Natural killer cell (primary cell): ENCODE measurements at regions of chr7 and their contacts with region 1.

Region 1: DNA sequence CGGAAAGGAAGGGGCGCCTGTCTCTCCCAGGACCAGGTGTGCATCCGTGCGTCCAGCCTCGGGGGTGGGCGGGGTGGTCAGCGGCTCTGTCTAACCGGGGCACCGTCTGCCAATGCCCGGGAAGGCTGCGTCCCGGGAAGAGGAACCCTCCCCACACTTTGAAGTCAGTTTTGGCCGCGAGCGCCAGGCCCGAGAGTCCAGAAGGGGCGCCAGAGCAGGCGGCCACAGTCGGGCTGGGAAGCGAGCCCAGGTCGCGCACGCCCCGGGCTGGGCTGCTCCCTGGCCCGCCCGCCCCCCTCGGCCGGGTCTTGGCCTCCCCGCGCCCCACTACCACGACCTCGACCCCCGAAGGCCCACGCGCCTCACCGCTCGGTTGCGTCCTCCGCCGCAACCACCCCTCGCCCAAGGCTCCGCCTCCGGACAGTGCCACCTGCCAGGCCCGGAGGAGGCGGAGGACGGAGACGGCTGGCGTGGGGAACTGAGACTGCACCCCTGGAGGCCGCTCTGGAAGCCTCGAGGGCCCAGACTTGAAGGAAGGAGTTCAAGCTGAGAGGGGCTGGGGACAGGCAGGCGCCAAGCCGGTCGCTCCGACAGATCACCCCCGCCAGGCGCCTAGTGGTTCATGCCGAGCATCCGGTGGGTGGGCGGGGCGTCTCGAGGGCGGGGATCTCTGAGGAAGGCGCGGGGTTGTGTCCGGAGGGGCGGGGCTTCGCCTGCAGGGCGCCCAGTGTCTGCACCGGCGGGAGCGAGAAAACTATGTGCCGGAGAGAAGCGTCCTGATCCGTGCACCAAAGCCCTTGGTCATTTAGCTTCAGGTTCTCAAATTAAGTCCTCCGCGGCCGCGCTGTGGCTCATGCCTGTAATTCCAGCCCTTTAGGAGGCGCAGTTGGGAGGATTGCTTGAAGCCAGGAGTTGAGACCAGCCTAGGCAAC is at the start of gene BRAT1:
- DNase-seq: peak; percentile 90 to 96
- ATAC-seq: peak; percentile 86 to 94 (median 90)
- H3K4me3 ChIP-seq: peak within 1 kb of the TSS; percentile 89
- H3K4me3 Mint-ChIP-seq: peak within 1 kb of the TSS; percentile 88
- H3K27ac ChIP-seq: peak within 1 kb of the TSS; percentile 99
- H3K27ac Mint-ChIP-seq: peak within 1 kb of the TSS; percentile 73 to 86
- H3K4me1 ChIP-seq: peaks cover 40% of the 10 kb centered on the region
- H3K4me1 Mint-ChIP-seq: peaks cover 30 to 41% of the 10 kb centered on the region in 2 donors
- H3K27me3 ChIP-seq: no peaks in the 10 kb centered on the region
- H3K27me3 Mint-ChIP-seq: no peaks in the 10 kb centered on the region
- CTCF ChIP-seq: peak; percentile 55
- total RNA-seq, gene BRAT1: 24.9 to 26.7 (median 25.6) TPM

Region 2: GRCh38 chr7:2241580-2242540 is 313.5 kb before region 1 on chr7 and contains the starts of genes MRM2 and NUDT1:
- intact Hi-C with region 1: no loop called
- DNase-seq: peak; percentile 73 to 78
- ATAC-seq: peak; percentile 84 to 86 (median 84)
- H3K4me3 ChIP-seq: peak within 1 kb of the TSS; percentile 96
- H3K4me3 Mint-ChIP-seq: peak within 1 kb of the TSS; percentile 95
- H3K27ac ChIP-seq: peak within 1 kb of the TSS; percentile 68
- H3K27ac Mint-ChIP-seq: peak within 1 kb of the TSS; percentile 74 to 97
- H3K4me1 ChIP-seq: peaks cover 59% of the 10 kb centered on the region
- H3K4me1 Mint-ChIP-seq: peaks cover 4 to 28% of the 10 kb centered on the region in 2 donors
- H3K27me3 ChIP-seq: no peaks in the 10 kb centered on the region
- H3K27me3 Mint-ChIP-seq: no peaks in the 10 kb centered on the region
- CTCF ChIP-seq: no peak
- total RNA-seq, gene MRM2: 7.9 to 12.0 (median 10.0) TPM
- total RNA-seq, gene NUDT1: 17.9 to 19.2 (median 18.2) TPM

Region 3: DNA sequence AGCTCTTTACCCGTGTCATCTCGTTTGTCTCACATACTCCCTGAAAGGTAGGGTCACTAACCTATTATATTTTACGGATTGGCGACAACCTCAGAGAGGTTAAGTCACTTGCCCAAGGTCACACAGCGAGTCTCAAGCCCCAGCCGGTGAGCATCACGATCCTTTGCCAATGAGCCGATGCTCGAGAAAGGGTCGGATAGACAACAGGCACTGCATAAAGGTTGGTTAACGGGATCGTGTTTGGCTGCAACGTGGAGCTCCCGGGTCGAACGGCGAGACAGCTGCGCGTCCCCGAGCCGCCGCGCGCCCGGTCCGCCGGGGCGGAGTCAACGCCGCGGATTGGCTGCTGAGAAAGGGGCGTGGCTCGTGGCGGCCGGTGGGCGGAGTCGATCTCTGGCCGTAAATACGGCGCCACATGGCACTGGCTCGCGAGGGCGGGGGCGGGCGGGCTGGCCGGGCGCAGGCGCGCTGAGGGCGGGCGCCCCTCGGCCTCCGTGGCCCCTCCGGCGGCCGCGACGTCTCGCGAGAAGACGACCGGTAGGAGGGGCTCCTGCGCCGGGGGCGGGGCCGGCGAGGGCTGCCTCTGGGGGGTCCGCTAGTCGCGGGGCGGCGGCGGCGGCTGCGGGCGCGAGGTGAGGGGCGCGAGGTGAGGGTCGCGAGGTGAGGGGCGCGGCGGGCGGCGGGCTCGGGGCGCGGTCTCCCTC is 152.2 kb before region 1 on chr7 and contains the start of gene CHST12:
- intact Hi-C with region 1: loop called (anchors 10 kb)
- DNase-seq: peak; percentile 95 to 97
- ATAC-seq: peak; percentile 71 to 91 (median 77)
- H3K4me3 ChIP-seq: peak within 1 kb of the TSS; percentile 94
- H3K4me3 Mint-ChIP-seq: peak within 1 kb of the TSS; percentile 96
- H3K27ac ChIP-seq: peak within 1 kb of the TSS; percentile 71
- H3K27ac Mint-ChIP-seq: peak within 1 kb of the TSS; percentile 94 to 95
- H3K4me1 ChIP-seq: peaks cover 66% of the 10 kb centered on the region
- H3K4me1 Mint-ChIP-seq: peaks cover 53 to 57% of the 10 kb centered on the region in 2 donors
- H3K27me3 ChIP-seq: no peaks in the 10 kb centered on the region
- H3K27me3 Mint-ChIP-seq: no peaks in the 10 kb centered on the region
- CTCF ChIP-seq: no peak
- total RNA-seq, gene CHST12: 102 to 159 (median 124) TPM

Region 4: GRCh38 chr7:2477447-2478398 is 77.7 kb before region 1 on chr7:
- intact Hi-C with region 1: loop called (anchors 5 kb)
- DNase-seq: peak; percentile 73 to 80
- ATAC-seq: peak; percentile 93 to 98 (median 96)
- H3K4me3 ChIP-seq: no peak overlapping the region
- H3K4me3 Mint-ChIP-seq: no peak overlapping the region
- H3K27ac ChIP-seq: no peak overlapping the region
- H3K27ac Mint-ChIP-seq: peak overlapping the region in 1 of 2 donors; percentile 33
- H3K4me1 ChIP-seq: peaks cover 19% of the 10 kb centered on the region
- H3K4me1 Mint-ChIP-seq: peaks cover 0 to 18% of the 10 kb centered on the region in 2 donors
- H3K27me3 ChIP-seq: no peaks in the 10 kb centered on the region
- H3K27me3 Mint-ChIP-seq: peaks cover 0 to 3% of the 10 kb centered on the region in 2 donors
- CTCF ChIP-seq: peak; percentile 80

Region 5: DNA sequence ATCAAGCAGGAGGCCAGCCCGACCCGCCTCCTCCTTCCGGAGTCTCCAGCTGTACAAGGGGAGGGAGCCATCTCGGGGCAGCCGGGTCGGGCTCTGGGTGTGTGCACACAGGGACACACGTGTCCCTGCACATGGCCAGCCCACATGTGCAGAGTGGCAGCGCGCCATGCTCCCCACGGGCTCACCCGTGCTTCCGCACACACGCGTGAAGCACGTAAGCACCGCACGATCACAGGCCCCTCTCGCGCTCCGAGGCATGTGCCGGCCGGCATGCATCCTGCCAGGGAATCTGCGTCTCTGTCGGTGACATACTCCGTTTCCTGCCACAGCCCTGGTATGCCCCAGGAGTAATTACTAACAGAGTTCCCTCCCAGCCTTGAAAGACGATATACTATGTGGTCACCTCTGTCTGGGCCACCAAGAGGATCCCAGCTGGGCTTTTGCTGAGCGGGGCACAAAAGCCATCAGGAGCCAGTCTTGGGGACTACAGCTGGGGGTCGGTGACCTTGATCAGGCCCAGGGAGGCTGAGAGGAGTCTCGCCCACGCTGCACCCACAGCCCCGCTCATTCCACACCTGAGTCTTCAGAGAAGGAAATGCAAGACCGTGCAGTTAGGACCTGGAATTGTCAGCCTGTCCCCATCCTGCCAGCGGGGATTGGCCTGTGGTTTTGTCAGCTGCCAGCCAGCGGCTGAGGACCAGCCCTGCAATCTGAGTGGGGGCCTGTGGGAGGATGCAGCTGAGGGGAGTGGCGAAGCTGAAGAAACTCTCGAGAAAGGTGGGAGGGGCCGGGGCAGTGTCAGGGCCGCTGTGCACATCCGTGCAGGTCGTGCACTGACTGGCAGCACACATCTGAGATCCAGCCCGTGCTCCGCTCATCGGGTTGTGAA is 46.8 kb before region 1 on chr7:
- intact Hi-C with region 1: loop called (anchors 1 kb)
- DNase-seq: peak; percentile 72 to 94
- ATAC-seq: peak; percentile 49 to 68 (median 61)
- H3K4me3 ChIP-seq: peak overlapping the region; percentile 12
- H3K4me3 Mint-ChIP-seq: peak overlapping the region; percentile 76
- H3K27ac ChIP-seq: peak overlapping the region; percentile 90
- H3K27ac Mint-ChIP-seq: peak overlapping the region in 1 of 2 donors; percentile 95
- H3K4me1 ChIP-seq: peaks cover 64% of the 10 kb centered on the region
- H3K4me1 Mint-ChIP-seq: peaks cover 37 to 61% of the 10 kb centered on the region in 2 donors
- H3K27me3 ChIP-seq: no peaks in the 10 kb centered on the region
- H3K27me3 Mint-ChIP-seq: no peaks in the 10 kb centered on the region
- CTCF ChIP-seq: no peak

Region 6: DNA sequence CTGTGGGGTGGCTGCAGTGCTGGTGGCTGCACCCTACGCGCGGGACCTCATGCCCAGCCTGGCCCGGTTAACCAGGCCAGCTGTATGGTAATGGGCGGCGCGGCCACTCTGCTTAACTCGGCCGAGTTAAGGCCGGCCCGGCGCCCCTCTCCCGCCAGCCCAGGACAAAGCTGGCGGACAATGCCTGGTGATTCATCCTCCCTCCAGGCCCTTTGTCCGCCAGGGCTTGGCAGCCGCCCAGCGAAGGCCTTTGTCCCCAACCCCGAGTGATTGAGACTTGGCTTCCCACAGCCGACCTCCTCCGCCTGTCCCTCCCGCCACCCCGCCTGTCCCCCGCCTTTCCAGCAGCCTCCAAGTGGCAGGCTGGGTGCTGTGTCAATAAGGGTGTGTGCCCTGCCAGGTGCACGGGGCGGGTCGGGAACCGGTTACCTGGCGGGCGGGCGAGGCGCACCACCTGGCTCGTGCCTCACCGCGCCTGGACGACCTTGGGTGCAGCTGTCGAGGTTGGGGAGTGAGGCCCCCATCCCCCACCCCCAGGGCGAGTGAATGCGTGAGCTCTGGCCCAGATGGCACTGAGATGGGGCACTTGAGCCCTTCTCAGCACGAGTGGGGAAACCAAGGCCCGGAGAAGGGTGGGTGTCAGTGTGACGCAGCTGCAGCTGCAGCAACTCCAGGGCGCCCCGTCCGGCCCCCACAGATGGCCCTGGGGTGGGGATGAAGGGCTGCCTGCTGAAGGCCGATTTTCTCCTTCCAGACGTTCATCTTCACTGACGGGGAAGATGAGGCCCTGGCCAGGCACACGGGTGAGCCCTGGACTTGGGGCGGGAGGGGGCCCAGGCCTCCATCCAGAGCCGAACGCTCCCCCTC is 31.2 kb before region 1 on chr7:
- intact Hi-C with region 1: loop called (anchors 2 kb)
- DNase-seq: peak in 1 of 2 donors; percentile 34
- ATAC-seq: no peak
- H3K4me3 ChIP-seq: no peak overlapping the region
- H3K4me3 Mint-ChIP-seq: peak overlapping the region; percentile 92
- H3K27ac ChIP-seq: peak overlapping the region; percentile 41
- H3K27ac Mint-ChIP-seq: peak overlapping the region; percentile 94 to 97
- H3K4me1 ChIP-seq: peaks cover 80% of the 10 kb centered on the region
- H3K4me1 Mint-ChIP-seq: peaks cover 36 to 52% of the 10 kb centered on the region in 2 donors
- H3K27me3 ChIP-seq: no peaks in the 10 kb centered on the region
- H3K27me3 Mint-ChIP-seq: no peaks in the 10 kb centered on the region
- CTCF ChIP-seq: no peak

Region 7: DNA sequence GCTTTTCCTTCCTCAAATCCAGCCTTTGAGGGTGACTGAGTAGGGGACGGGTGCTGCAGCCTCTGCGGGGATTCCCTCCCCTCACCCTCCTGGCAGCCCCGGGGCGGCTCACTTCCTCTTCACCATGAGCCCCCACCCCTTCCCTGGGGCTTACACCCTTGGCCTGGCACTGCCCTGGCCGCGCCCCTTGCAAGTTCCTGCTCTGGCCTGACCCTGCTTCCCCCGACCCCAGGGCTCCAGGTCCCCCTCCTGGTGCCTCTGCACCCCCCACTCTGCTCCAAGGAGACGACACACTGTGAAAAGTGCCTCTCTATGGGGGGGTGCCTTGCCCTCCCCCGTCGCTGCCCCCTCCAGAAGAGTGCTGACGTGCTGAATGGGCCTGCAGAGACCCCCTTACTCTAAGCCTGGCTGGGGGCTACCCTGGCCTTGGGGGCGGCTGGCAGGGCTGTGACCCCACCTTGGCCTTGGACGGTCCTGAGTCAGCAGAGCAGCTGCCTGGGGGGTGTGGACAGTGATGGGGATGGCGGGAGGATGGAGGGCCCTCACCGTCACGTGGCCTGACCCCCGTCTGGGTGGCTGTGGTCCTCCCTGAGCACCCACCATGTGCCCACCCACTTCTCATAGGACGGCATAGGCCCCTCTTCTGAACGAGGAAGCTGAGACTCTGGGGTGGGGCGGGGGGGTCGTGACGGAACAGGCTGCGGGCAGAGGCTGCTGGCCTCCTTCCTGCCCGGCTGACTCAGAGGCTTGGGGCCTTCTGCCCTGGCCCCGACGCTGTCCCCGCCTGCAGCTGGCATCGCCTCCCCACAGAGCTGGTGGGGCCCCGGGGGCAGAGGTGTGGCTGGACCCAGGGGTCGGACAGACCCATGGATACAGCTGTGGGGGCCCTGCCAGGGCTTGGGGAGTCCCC is 26.0 kb before region 1 on chr7:
- intact Hi-C with region 1: loop called (anchors 2 kb)
- DNase-seq: peak; percentile 71 to 83
- ATAC-seq: peak; percentile 55 to 75 (median 59)
- H3K4me3 ChIP-seq: peak overlapping the region; percentile 10
- H3K4me3 Mint-ChIP-seq: peak overlapping the region; percentile 82
- H3K27ac ChIP-seq: peak overlapping the region; percentile 94
- H3K27ac Mint-ChIP-seq: peak overlapping the region; percentile 90 to 97
- H3K4me1 ChIP-seq: peaks cover 72% of the 10 kb centered on the region
- H3K4me1 Mint-ChIP-seq: peaks cover 26 to 51% of the 10 kb centered on the region in 2 donors
- H3K27me3 ChIP-seq: no peaks in the 10 kb centered on the region
- H3K27me3 Mint-ChIP-seq: no peaks in the 10 kb centered on the region
- CTCF ChIP-seq: no peak

Region 8: DNA sequence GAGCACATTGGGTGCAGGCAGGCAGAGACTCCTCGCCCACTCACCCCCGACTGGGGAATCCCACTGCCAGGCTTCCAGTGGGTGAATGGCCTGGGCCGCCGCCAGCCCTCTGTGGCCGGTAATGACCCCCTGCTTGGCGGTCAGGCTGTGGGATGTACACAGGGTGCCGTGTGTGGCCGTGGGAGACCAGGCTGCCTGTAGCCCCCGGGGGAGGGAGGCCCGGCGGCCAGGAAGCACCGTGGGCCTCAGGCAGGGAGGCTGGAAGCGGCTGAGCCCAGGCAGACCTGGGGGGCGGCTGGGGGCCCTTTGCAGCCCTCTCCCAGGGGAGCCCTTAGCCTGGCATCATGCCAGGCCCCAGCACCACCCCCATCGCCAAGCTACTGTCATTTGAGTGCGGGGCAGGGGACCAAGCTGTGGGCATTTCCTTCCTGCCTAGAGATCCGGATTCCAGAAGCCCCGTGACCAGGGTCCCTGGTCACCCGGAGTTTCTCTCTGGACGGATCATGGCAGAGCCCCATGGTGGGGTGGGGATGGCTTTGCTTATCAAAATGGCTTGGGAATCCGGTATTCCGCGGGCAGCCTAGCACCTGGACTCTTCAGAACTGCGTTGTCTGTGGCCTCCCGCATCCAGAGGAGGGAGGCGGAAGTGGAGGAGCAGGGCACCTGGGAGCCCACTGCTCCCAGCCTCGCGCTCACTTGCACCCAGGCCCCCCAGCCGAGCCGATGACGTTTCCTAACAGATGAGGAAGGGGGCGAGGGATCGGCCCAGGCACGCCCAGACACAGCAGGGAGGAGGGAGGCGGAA is 77.5 kb after region 1 on chr7:
- intact Hi-C with region 1: loop called (anchors 1 kb)
- DNase-seq: peak; percentile 44 to 52
- ATAC-seq: peak in 1 of 3 donors; percentile 2
- H3K4me3 ChIP-seq: peak overlapping the region; percentile 51
- H3K4me3 Mint-ChIP-seq: peak overlapping the region; percentile 93
- H3K27ac ChIP-seq: peak overlapping the region; percentile 53
- H3K27ac Mint-ChIP-seq: peak overlapping the region; percentile 72 to 92
- H3K4me1 ChIP-seq: peaks cover 46% of the 10 kb centered on the region
- H3K4me1 Mint-ChIP-seq: peaks cover 10 to 34% of the 10 kb centered on the region in 2 donors
- H3K27me3 ChIP-seq: no peaks in the 10 kb centered on the region
- H3K27me3 Mint-ChIP-seq: no peaks in the 10 kb centered on the region
- CTCF ChIP-seq: no peak